ENCODE measurements at regions of chr10 and their contacts with region 1.

Region 1: GRCh38 chr10:89207181-89207800 is at the start of gene CH25H:
- DNase-seq: peak; percentile 62
- ATAC-seq: peak; percentile 66
- H3K4me3 Mint-ChIP-seq: peak within 1 kb of the TSS; percentile 74
- H3K27ac Mint-ChIP-seq: no peak within 1 kb of the TSS
- H3K4me1 Mint-ChIP-seq: peaks cover 20% of the 10 kb centered on the region
- H3K27me3 Mint-ChIP-seq: peaks cover 4% of the 10 kb centered on the region; the same call in 1 of the 2 replicates
- CTCF ChIP-seq: no peak
- total RNA-seq, gene CH25H: 0.11 to 0.14 TPM in 2 of 3 replicates, not detected in the other

Region 2: GRCh38 chr10:88990384-88991160 is 216.7 kb before region 1 on chr10 and contains the start of gene FAS:
- CTCF ChIA-PET with region 1: interaction called, 10 read pairs
- POLR2A ChIA-PET with region 1: interaction called, 3 read pairs
- DNase-seq: peak; percentile 51
- ATAC-seq: peak; percentile 76
- H3K4me3 Mint-ChIP-seq: peak within 1 kb of the TSS; percentile 88
- H3K27ac Mint-ChIP-seq: no peak within 1 kb of the TSS
- H3K4me1 Mint-ChIP-seq: peaks cover 31% of the 10 kb centered on the region
- H3K27me3 Mint-ChIP-seq: peaks cover 36% of the 10 kb centered on the region
- CTCF ChIP-seq: no peak
- total RNA-seq, gene FAS: 2.1 to 4.1 TPM (median 3.3 TPM) in 3 replicates

Region 3: DNA sequence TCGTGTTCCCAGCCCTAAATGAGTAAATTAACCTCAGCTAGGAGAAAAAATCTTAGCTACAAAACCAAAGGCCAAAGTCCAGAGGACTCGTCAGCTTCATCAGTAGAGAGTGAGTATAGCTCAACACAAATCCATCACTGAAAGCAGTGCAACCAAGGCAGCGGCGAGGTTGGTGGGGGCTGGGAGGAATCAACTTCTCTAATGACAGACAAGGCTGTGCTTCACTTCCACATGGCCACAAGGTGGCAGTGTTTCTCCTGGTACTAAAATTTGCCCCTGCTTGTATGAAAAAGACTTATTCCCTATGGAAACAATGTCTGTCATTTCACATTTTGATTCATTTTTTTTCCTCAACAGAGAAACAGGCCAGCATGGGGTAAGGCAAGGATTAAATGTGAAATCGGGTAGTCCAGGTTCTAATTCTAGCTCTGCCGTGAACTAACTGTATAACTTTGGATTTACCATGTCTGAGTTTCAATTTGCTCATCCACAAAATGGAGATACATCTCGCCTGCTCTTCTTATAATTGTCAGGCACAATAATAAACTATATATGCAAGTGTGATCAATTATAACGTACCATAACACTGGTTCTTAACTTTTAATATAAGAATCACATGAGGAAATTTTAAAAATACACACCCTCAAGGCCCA is 177.4 kb before region 1 on chr10:
- CTCF ChIA-PET with region 1: interaction called, 41 read pairs
- POLR2A ChIA-PET with region 1: interaction called, 3 read pairs
- DNase-seq: peak; percentile 67
- ATAC-seq: peak; percentile 85
- H3K4me3 Mint-ChIP-seq: no peak overlapping the region
- H3K27ac Mint-ChIP-seq: no peak overlapping the region
- H3K4me1 Mint-ChIP-seq: peaks cover 20% of the 10 kb centered on the region
- H3K27me3 Mint-ChIP-seq: no peaks in the 10 kb centered on the region
- CTCF ChIP-seq: peak; percentile 79

Region 4: DNA sequence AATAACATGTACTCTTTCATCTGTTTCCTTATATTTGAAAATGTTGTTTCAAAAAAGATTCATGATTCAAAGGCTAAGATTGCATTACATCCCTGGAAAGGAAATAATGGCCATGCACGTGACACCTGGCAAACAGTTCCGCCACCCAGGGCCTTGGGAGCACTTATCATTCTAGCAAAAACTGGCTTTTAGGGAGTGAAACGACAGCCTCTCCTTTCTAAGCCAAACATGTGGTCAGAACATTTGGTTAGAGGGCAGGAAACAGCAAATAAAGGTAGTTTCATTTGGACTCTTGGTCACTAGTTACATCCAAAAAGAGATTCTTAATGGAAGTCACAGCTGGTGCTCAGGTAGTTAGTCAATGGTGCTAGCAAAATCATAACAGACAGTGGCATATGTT is 133.2 kb before region 1 on chr10:
- CTCF ChIA-PET with region 1: no interaction called
- POLR2A ChIA-PET with region 1: no interaction called
- DNase-seq: no peak
- ATAC-seq: no peak
- H3K4me3 Mint-ChIP-seq: no peak overlapping the region
- H3K27ac Mint-ChIP-seq: no peak overlapping the region
- H3K4me1 Mint-ChIP-seq: peaks cover 5% of the 10 kb centered on the region
- H3K27me3 Mint-ChIP-seq: no peaks in the 10 kb centered on the region
- CTCF ChIP-seq: no peak